ENCODE measurements at regions of chr2 and their contacts with region 1.

Region 1: DNA sequence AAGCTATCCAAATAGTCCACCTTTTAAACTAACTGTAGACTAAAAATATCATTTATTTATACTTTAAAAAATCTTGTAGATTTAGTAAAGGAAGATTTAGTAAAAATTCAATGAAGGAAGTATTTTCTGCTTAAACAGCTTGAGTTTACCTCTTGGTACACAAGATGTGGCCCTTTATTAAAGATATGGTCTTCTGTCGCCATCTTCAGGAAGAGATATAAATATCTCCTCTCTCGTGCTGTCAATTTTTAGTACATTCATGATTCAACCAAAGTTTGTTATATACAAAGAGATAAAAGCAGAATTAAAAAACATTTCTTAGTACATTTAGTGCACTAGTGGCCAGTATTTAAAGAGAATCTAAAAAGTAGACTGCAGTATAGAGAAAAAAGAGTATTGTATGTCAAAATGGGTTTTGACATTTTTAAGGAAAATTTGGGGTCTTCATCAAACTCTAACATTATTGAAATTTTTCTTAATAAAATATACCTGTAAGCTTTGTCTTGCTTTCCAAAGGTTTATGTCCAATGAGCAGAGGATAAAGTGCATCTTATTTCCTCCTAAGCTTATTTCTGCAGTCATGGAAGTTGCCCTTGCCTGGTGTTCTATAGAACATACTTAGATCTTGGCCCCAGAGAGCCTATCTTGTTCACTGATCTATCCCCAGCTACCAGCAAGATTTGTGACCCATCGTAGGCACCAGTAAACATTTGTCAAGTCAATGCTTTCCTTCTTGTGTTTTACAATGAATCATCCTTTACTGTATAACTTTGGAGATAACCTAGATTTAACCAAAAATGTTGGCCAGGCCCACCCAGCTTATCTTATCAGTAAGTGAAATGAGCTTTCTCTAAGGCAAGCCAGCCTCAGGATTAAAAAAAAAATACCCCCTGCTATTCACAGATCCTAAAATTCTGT is 18.5 kb upstream of the EML6 start:
- DNase-seq: no peak
- ATAC-seq: peak; percentile 78
- H3K4me3 ChIP-seq: no peak overlapping the region
- H3K27ac ChIP-seq: no peak overlapping the region
- H3K4me1 ChIP-seq: no peaks in the 10 kb centered on the region
- H3K27me3 ChIP-seq: peaks cover 0 to 5% of the 10 kb centered on the region in 2 experiments; a peak in 2 of 4 replicates
- CTCF ChIP-seq: peak; percentile 35 to 77 (median 47); a peak in 4 of 6 replicates
- EP300 ChIP-seq: no peak
- POLR2A ChIP-seq: no peak
- RAD21 ChIP-seq: peak; percentile 86

Region 2: GRCh38 chr2:54106631-54107454 is 598.1 kb before region 1 on chr2:
- CTCF ChIA-PET with region 1: interaction called, 37 read pairs
- POLR2A ChIA-PET with region 1: no interaction called
- RAD21 ChIA-PET with region 1: interaction called, 24 read pairs
- SMC1A ChIA-PET with region 1: interaction called, 16 read pairs
- in situ Hi-C with region 1: loop called (anchors 25 kb)
- intact Hi-C with region 1: loop called (anchors 2 kb)
- DNase-seq: no peak
- ATAC-seq: peak; percentile 83
- H3K4me3 ChIP-seq: no peak overlapping the region
- H3K27ac ChIP-seq: no peak overlapping the region
- H3K4me1 ChIP-seq: no peaks in the 10 kb centered on the region
- H3K27me3 ChIP-seq: no peaks in the 10 kb centered on the region
- CTCF ChIP-seq: peak; percentile 59 to 73 (median 60); a peak in 5 of 6 replicates
- EP300 ChIP-seq: no peak
- POLR2A ChIP-seq: no peak
- RAD21 ChIP-seq: peak; percentile 73

Region 3: DNA sequence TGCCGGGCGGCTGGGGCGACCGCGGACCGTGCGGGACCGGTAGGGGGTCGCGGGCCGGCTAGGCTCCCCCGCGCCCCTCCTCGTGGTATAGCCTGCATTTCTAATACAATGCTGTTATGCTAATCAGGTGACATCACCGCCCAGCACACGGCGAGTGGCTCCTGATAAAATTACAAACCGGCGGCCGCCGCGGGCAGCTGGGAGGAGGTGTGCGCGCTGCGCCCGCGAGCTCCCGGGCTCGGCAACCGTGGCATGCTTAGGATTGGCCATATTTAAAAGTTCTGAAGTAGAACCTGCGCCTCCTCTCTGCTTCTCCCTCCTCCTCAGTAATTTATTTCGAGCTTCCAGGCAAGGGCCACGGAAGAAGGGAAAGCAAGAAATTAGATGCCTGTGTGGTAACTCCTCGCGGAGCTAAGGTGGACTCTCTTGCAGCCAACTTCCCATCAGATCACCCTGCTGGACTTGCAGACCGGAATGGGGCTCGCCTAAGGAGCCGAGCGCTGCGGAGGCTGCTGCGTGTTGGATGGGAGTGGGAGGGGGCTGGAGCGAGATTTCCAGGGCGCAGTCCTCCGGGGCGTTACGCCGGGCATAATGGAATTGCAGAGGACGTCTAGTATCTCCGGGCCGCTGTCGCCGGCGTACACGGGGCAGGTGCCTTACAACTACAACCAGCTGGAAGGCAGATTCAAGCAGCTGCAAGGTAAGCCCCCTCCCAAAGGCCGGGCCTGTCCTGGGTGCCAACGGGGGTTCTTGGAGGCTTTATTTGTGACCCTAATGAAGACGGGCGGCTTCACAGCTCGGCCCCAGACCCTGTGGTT is 146.6 kb before region 1 on chr2:
- CTCF ChIA-PET with region 1: interaction called, 13 read pairs
- POLR2A ChIA-PET with region 1: interaction called, 5 read pairs
- RAD21 ChIA-PET with region 1: interaction called, 4 read pairs
- SMC1A ChIA-PET with region 1: interaction called, 5 read pairs
- in situ Hi-C with region 1: no loop called
- intact Hi-C with region 1: no loop called
- DNase-seq: no peak
- ATAC-seq: peak; percentile 63
- H3K4me3 ChIP-seq: peak overlapping the region; percentile 99
- H3K27ac ChIP-seq: peak overlapping the region; percentile 96
- H3K4me1 ChIP-seq: peaks cover 18% of the 10 kb centered on the region
- H3K27me3 ChIP-seq: no peaks in the 10 kb centered on the region
- CTCF ChIP-seq: no peak
- EP300 ChIP-seq: no peak
- POLR2A ChIP-seq: peak; percentile 78
- RAD21 ChIP-seq: no peak

Region 4: GRCh38 chr2:54657664-54658083 is 47.3 kb before region 1 on chr2:
- CTCF ChIA-PET with region 1: interaction called, 225 read pairs
- POLR2A ChIA-PET with region 1: interaction called, 3 read pairs
- RAD21 ChIA-PET with region 1: interaction called, 38 read pairs
- SMC1A ChIA-PET with region 1: interaction called, 187 read pairs
- in situ Hi-C with region 1: no loop called
- intact Hi-C with region 1: loop called (anchors 2 kb)
- DNase-seq: no peak
- ATAC-seq: peak; percentile 88
- H3K4me3 ChIP-seq: no peak overlapping the region
- H3K27ac ChIP-seq: no peak overlapping the region
- H3K4me1 ChIP-seq: no peaks in the 10 kb centered on the region
- H3K27me3 ChIP-seq: no peaks in the 10 kb centered on the region
- CTCF ChIP-seq: peak; percentile 50 to 63 (median 60); a peak in 5 of 6 replicates
- EP300 ChIP-seq: no peak
- POLR2A ChIP-seq: peak; percentile 56; the same call in 1 of the 2 replicates
- RAD21 ChIP-seq: peak; percentile 51; the same call in 1 of the 2 replicates

Region 5: DNA sequence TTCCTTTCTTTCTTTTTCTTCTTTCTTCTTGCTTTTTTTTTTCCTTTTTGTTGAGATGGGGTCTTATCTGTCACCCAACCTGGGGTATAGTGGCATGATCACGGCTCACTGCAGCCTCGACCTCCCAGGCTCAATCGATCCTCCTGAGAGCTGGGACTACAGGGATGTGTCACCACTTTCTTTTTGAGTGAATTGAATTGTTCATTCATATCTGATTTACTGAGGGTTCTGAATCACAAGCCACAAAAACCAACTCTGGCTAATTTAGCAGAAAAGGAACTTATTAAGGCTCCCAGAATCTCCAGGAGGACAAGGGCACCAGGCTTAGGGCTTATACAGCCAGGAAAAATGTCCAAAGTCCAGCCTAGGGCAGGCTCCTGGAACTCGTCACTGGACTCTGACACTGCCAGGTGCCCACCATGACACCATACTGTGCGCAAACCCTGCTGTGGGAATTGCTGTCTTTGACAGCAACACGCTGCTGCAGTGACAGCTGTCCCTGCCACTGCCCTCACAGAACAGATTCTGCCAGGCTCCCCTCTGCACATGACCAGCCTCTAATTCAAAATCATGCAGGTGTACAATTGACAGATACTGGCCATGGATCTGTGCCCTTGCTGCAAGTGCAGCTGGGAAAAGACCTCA is 24.4 kb before region 1 on chr2:
- CTCF ChIA-PET with region 1: interaction called, 42 read pairs
- POLR2A ChIA-PET with region 1: interaction called, 11 read pairs
- RAD21 ChIA-PET with region 1: interaction called, 29 read pairs
- SMC1A ChIA-PET with region 1: interaction called, 34 read pairs
- in situ Hi-C with region 1: no loop called
- intact Hi-C with region 1: no loop called
- DNase-seq: peak; percentile 77
- ATAC-seq: peak; percentile 81
- H3K4me3 ChIP-seq: peak overlapping the region; percentile 34; the same call in 1 of the 2 replicates
- H3K27ac ChIP-seq: peak overlapping the region; percentile 47
- H3K4me1 ChIP-seq: peaks cover 31% of the 10 kb centered on the region
- H3K27me3 ChIP-seq: no peaks in the 10 kb centered on the region; a peak in 1 of 4 replicates
- CTCF ChIP-seq: no peak
- EP300 ChIP-seq: peak; percentile 48 to 84; a peak in 3 of 4 replicates
- POLR2A ChIP-seq: no peak
- RAD21 ChIP-seq: no peak

Region 6: DNA sequence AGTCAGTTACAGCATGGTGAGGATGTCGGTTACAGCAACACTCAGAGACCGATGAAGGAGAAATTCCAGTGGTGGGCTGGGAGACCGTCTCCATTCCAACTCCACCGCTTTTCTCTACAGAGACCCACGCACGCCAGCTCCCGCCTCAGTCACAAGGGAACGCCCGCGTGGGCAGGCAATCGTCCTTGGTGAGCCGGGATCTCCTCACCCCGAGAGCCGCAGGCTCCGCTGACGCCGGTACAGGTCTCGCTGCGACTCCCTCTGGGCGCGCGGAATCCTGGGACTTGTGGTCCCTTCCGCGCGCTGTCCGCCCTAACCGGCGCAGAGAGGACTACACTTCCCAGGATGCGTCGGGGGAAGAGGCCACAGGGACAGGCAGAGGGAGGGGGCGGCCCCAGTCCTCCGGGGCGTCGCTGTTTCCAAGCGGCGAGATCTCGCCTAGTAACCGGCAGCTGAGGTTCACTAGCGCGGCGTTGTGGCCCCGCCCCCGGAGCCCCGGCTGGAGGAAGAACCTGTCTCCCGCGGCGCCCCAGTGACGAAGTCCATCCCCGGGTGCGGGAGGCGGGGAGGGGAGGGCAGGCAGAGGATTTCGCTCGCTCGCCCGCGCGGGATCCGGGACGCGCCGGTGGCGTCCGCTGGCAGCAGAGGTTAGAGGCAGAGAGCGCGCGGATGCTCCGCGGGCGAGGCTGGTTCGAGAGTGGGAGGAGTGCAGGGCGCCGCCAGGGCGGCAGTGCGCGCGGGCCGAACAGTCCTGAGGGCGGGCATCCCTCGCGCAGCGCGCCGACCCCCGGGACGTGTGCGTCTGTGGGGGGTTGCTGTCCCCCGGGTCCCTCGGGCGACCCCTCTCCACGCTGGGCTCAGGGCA is 18.4 kb after region 1 on chr2 and contains the start of gene EML6:
- CTCF ChIA-PET with region 1: interaction called, 10 read pairs
- POLR2A ChIA-PET with region 1: interaction called, 3 read pairs
- RAD21 ChIA-PET with region 1: interaction called, 8 read pairs
- SMC1A ChIA-PET with region 1: interaction called, 6 read pairs
- in situ Hi-C with region 1: no loop called
- intact Hi-C with region 1: no loop called
- DNase-seq: peak; percentile 89
- ATAC-seq: peak; percentile 99
- H3K4me3 ChIP-seq: peak within 1 kb of the TSS; percentile 88
- H3K27ac ChIP-seq: no peak within 1 kb of the TSS
- H3K4me1 ChIP-seq: no peaks in the 10 kb centered on the region
- H3K27me3 ChIP-seq: peaks cover 7 to 10% of the 10 kb centered on the region in 2 experiments
- CTCF ChIP-seq: peak; percentile 3 to 26 (median 19); a peak in 1 of 6 replicates
- EP300 ChIP-seq: no peak
- POLR2A ChIP-seq: peak; percentile 61; the same call in 1 of the 2 replicates
- RAD21 ChIP-seq: no peak
- polyA plus RNA-seq, gene EML6: 0.29 to 0.35 TPM